Activated T-helper 1 cell treated with anti-CD3 and anti-CD28 coated beads, Interleukin-12 subunit alpha, Interleukin-12 subunit beta, Interleukin-2, Interleukin-4 antibody, amounts not matched to agents 30 ng/mL and 10 ng/mL and 1 ng/mL, durations not matched to agents 14 hours and 24 hours and 36 hours (primary cell): ENCODE measurements at regions of chr3 and their contacts with region 1.

Region 1: GRCh38 chr3:141959921-141960554 is 83.6 kb downstream of the ATP1B3 start:
- DNase-seq: no peak
- H3K4me3 Mint-ChIP-seq: no peak overlapping the region
- H3K27ac Mint-ChIP-seq: no peak overlapping the region
- H3K4me1 Mint-ChIP-seq: no peaks in the 10 kb centered on the region
- H3K27me3 Mint-ChIP-seq: no peaks in the 10 kb centered on the region

Region 2: DNA sequence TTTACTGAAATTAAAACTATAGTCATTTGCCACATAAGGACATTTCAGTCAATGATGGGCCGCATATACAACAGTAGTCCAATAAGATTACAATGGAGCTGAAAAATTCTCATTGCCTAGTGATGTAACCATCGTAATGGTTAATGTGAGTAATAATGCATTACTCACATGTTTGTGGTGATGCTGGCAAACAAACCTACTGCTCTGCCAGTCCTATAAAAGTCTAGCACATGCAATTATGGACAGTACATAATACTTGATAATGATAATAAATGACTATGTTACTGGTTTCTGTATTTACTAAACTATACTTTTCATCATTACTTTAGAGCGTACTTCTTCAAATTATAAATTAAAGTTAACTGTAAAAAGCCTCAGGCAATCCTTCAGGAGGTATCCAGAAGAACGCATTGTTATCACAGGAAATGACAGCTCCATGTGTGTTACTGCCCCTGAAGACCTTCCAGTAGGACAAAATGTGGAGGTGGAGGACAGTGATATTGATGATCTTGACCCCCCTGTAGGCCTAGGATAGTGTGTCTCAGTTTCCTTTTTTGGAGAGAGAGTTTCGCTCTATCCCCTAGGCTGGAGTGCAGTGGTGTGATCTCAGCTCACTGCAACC is 19.1 kb after region 1 on chr3:
- intact Hi-C with region 1: no loop called
- DNase-seq: no peak
- H3K4me3 Mint-ChIP-seq: no peak overlapping the region
- H3K27ac Mint-ChIP-seq: no peak overlapping the region
- H3K4me1 Mint-ChIP-seq: no peaks in the 10 kb centered on the region
- H3K27me3 Mint-ChIP-seq: no peaks in the 10 kb centered on the region

Region 3: GRCh38 chr3:141998669-141999290 is 38.7 kb after region 1 on chr3:
- intact Hi-C with region 1: loop called (anchors 1 kb)
- DNase-seq: no peak
- H3K4me3 Mint-ChIP-seq: no peak overlapping the region
- H3K27ac Mint-ChIP-seq: no peak overlapping the region
- H3K4me1 Mint-ChIP-seq: no peaks in the 10 kb centered on the region
- H3K27me3 Mint-ChIP-seq: no peaks in the 10 kb centered on the region

Region 4: DNA sequence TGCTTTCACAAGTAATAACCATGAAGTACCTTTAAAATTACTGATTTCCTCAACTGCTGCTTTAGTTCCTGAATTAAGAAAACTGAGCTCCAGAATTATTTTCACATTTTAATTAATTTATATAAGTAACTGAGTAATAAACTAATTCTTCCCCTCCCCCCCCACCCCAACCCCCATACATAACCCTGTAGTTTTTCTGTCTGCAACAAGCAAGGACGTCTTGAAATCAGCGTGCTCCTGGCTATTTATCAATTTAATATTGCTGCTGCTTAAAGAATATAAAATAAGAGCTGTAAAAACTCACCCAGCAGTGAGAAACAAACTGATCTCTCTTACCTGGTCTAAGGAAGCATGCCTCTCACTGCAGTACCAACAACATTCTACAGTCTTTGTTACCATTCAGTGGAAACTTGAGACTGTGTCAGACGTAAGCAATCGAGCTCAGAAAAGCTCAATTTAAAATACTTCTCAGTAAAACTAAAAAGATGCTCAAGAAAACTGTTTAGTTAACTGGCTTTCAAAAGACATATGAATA is 68.3 kb after region 1 on chr3:
- intact Hi-C with region 1: no loop called
- DNase-seq: peak; percentile 22
- H3K4me3 Mint-ChIP-seq: peak overlapping the region; percentile 87
- H3K27ac Mint-ChIP-seq: peak overlapping the region; percentile 49
- H3K4me1 Mint-ChIP-seq: peaks cover 18% of the 10 kb centered on the region
- H3K27me3 Mint-ChIP-seq: no peaks in the 10 kb centered on the region

Region 5: GRCh38 chr3:142129516-142130171 is 169.6 kb after region 1 on chr3:
- intact Hi-C with region 1: loop called (anchors 2 kb)
- DNase-seq: no peak
- H3K4me3 Mint-ChIP-seq: no peak overlapping the region
- H3K27ac Mint-ChIP-seq: no peak overlapping the region
- H3K4me1 Mint-ChIP-seq: no peaks in the 10 kb centered on the region
- H3K27me3 Mint-ChIP-seq: no peaks in the 10 kb centered on the region